GM12878 (cell line): ENCODE measurements at regions of chr13 and their contacts with region 1.

Region 1: DNA sequence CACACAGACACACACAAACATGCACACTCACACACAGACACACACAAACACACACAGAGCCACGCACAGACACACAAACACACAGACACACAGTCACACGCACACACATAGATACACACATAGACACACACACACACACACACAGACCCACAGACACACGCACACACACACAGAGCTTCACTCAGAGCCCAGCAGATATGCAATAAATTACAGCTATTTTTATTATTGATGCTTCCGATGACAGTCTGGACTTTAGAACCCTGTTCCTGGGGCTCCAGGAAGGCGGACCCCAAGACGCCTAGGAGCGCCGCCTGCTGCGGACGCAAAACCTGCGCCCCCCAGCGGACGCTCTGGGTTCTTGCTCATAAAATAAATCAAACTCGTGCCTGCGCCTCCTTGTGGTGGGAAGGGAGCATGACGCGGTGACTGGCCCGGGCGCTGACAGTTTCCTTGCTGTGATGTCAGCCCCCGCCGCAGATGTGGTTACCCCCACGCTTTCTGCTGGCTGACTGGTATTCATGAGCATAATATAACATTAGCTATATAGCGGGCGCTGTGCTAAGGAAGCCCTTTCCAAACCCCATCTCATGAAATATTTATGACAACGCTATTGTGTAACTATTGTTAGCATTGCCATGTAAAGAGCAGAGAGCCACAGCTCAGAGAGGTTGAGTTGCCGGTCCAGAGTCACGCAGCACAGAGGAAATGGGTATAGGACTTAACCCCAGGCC is 64.4 kb upstream of the TM9SF2 start:
- DNase-seq: no peak
- ATAC-seq: peak; percentile 51
- H3K4me3 ChIP-seq: no peak overlapping the region
- H3K27ac ChIP-seq: peak overlapping the region; percentile 65
- H3K4me1 ChIP-seq: peaks cover 50% of the 10 kb centered on the region
- H3K27me3 ChIP-seq: peaks cover 2 to 4% of the 10 kb centered on the region in 2 experiments; a peak in 2 of 4 replicates
- CTCF ChIP-seq: peak; percentile 100; a peak in 5 of 6 replicates
- EP300 ChIP-seq: peak; percentile 35 to 51; a peak in 2 of 4 replicates
- POLR2A ChIP-seq: no peak
- RAD21 ChIP-seq: peak; percentile 97

Region 2: DNA sequence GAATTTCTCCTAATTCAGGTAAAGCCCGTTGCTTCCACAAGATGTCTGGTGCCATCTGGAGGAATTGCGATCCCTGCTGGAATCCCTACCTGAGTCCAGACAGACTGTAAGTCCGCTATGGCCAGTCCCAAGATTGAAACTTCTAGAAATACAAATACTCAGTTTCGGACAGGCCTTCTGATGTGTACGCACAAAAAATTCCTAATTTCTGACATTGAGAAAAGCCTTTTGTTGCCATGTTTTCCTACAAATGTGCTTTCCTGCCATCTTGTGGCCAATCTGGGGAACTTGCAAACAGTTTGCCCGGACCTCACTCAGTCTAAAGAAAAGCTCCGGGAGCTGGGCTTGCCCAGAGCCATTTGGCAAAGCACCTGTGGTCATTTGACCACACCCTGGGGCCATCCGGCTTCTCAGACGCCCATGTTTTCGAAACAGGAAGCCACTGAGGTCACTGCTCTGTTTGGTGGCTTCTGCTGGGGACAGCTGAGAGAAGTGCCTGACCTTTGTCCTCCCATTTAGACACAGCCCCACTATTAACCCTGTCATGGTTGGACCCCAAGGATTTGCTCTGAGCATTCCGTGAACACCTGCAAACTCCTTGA is 763.8 kb before region 1 on chr13:
- CTCF ChIA-PET with region 1: no interaction called
- POLR2A ChIA-PET with region 1: no interaction called
- RAD21 ChIA-PET with region 1: no interaction called
- SMC1A ChIA-PET with region 1: no interaction called
- in situ Hi-C with region 1: no loop called
- intact Hi-C with region 1: no loop called
- DNase-seq: peak; percentile 13
- ATAC-seq: peak; percentile 96
- H3K4me3 ChIP-seq: no peak overlapping the region
- H3K27ac ChIP-seq: no peak overlapping the region
- H3K4me1 ChIP-seq: no peaks in the 10 kb centered on the region
- H3K27me3 ChIP-seq: no peaks in the 10 kb centered on the region; a peak in 1 of 4 replicates
- CTCF ChIP-seq: peak; percentile 85 to 90 (median 86)
- EP300 ChIP-seq: no peak
- POLR2A ChIP-seq: no peak
- RAD21 ChIP-seq: peak; percentile 88

Region 3: GRCh38 chr13:99281811-99282263 is 155.0 kb before region 1 on chr13:
- CTCF ChIA-PET with region 1: interaction called, 18 read pairs
- POLR2A ChIA-PET with region 1: no interaction called
- RAD21 ChIA-PET with region 1: interaction called, 7 read pairs
- SMC1A ChIA-PET with region 1: interaction called, 300 read pairs
- in situ Hi-C with region 1: no loop called
- intact Hi-C with region 1: loop called (anchors 5 kb)
- DNase-seq: no peak
- ATAC-seq: peak; percentile 89
- H3K4me3 ChIP-seq: peak overlapping the region; percentile 8
- H3K27ac ChIP-seq: peak overlapping the region; percentile 79
- H3K4me1 ChIP-seq: peaks cover 53% of the 10 kb centered on the region
- H3K27me3 ChIP-seq: no peaks in the 10 kb centered on the region
- CTCF ChIP-seq: no peak
- EP300 ChIP-seq: no peak
- POLR2A ChIP-seq: no peak
- RAD21 ChIP-seq: no peak

Region 4: GRCh38 chr13:99307648-99308339 is 129.1 kb before region 1 on chr13:
- CTCF ChIA-PET with region 1: interaction called, 13 read pairs
- POLR2A ChIA-PET with region 1: interaction called, 8 read pairs
- RAD21 ChIA-PET with region 1: interaction called, 25 read pairs
- SMC1A ChIA-PET with region 1: interaction called, 29 read pairs
- in situ Hi-C with region 1: no loop called
- intact Hi-C with region 1: loop called (anchors 2 kb)
- DNase-seq: no peak
- ATAC-seq: peak; percentile 50
- H3K4me3 ChIP-seq: peak overlapping the region; percentile 98
- H3K27ac ChIP-seq: peak overlapping the region; percentile 93
- H3K4me1 ChIP-seq: peaks cover 49% of the 10 kb centered on the region
- H3K27me3 ChIP-seq: no peaks in the 10 kb centered on the region
- CTCF ChIP-seq: no peak
- EP300 ChIP-seq: no peak
- POLR2A ChIP-seq: no peak; the same call in 1 of the 2 replicates
- RAD21 ChIP-seq: no peak

Region 5: DNA sequence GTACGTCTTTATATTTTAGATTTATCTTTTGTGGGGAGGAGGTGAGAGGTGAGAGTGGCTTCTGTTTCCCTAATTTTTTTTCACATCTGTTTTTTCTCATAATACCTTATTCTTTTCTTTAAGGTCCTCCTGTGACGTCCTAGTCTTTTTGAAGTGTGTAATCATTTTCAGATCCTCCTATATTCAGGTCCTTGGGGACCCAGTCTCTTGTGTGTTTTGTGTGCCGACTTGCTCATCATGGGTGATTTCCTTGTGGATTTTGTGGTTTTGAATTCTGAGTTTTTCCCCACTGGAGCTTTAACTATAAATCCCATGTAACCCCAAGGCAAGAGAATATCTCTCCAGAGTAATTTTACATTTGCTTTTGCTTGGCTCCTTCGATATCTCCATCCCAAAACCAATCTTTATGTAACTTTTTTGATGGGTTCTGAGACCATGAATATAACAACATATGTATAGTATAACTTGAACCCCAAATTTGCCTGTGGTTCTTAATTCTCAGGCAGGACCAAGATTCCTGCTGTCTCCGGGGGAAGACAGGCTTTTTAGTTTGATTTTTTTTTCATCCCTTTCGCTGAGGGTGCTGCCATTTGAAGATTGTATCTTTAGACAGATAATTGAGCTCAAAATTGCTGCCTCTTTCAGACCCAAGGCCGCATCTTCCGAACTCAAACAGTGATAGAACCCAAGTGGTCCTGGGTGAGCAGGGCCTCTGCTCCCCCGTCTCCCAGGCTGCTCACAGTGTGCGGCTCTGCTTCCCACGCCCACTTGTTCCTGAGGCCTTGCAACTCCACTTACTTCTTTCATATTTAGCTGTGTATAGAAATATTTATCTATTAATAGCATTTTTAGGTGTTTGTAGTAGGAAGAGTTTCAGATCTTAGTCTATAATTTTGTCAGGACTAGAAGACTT is 70.5 kb before region 1 on chr13:
- CTCF ChIA-PET with region 1: interaction called, 27 read pairs
- POLR2A ChIA-PET with region 1: interaction called, 19 read pairs
- RAD21 ChIA-PET with region 1: interaction called, 43 read pairs
- SMC1A ChIA-PET with region 1: interaction called, 65 read pairs
- in situ Hi-C with region 1: no loop called
- intact Hi-C with region 1: loop called (anchors 1 kb)
- DNase-seq: peak; percentile 87
- ATAC-seq: peak; percentile 67
- H3K4me3 ChIP-seq: peak overlapping the region; percentile 23; the same call in 1 of the 2 replicates
- H3K27ac ChIP-seq: peak overlapping the region; percentile 93
- H3K4me1 ChIP-seq: peaks cover 54% of the 10 kb centered on the region
- H3K27me3 ChIP-seq: no peaks in the 10 kb centered on the region
- CTCF ChIP-seq: no peak
- EP300 ChIP-seq: peak; percentile 51 to 78; a peak in 1 of 4 replicates
- POLR2A ChIP-seq: 0 out of 2 replicates have a peak, but pooled peaks have one; percentile 19
- RAD21 ChIP-seq: peak; percentile 5; the same call in 1 of the 2 replicates

Region 6: GRCh38 chr13:99386911-99387788 is 49.7 kb before region 1 on chr13:
- CTCF ChIA-PET with region 1: interaction called, 577 read pairs
- POLR2A ChIA-PET with region 1: interaction called, 26 read pairs
- RAD21 ChIA-PET with region 1: interaction called, 168 read pairs
- SMC1A ChIA-PET with region 1: interaction called, 265 read pairs
- in situ Hi-C with region 1: loop called (anchors 5 kb)
- intact Hi-C with region 1: loop called (anchors 1 kb)
- DNase-seq: peak; percentile 66
- ATAC-seq: peak; percentile 93
- H3K4me3 ChIP-seq: no peak overlapping the region
- H3K27ac ChIP-seq: peak overlapping the region; percentile 41; the same call in 1 of the 2 replicates
- H3K4me1 ChIP-seq: peaks cover 26% of the 10 kb centered on the region
- H3K27me3 ChIP-seq: no peaks in the 10 kb centered on the region
- CTCF ChIP-seq: peak; percentile 95 to 99 (median 96)
- EP300 ChIP-seq: no peak
- POLR2A ChIP-seq: no peak
- RAD21 ChIP-seq: peak; percentile 99

Region 7: GRCh38 chr13:99417201-99418102 is 19.4 kb before region 1 on chr13:
- CTCF ChIA-PET with region 1: interaction called, 65 read pairs
- POLR2A ChIA-PET with region 1: interaction called, 6 read pairs
- RAD21 ChIA-PET with region 1: interaction called, 43 read pairs
- SMC1A ChIA-PET with region 1: interaction called, 111 read pairs
- in situ Hi-C with region 1: no loop called
- intact Hi-C with region 1: loop called (anchors 1 kb)
- DNase-seq: no peak
- ATAC-seq: no peak
- H3K4me3 ChIP-seq: no peak overlapping the region
- H3K27ac ChIP-seq: no peak overlapping the region
- H3K4me1 ChIP-seq: peaks cover 40% of the 10 kb centered on the region
- H3K27me3 ChIP-seq: no peaks in the 10 kb centered on the region
- CTCF ChIP-seq: no peak
- EP300 ChIP-seq: no peak
- POLR2A ChIP-seq: no peak
- RAD21 ChIP-seq: no peak